ENCODE measurements at regions of chr10 and their contacts with region 1.

Region 1: DNA sequence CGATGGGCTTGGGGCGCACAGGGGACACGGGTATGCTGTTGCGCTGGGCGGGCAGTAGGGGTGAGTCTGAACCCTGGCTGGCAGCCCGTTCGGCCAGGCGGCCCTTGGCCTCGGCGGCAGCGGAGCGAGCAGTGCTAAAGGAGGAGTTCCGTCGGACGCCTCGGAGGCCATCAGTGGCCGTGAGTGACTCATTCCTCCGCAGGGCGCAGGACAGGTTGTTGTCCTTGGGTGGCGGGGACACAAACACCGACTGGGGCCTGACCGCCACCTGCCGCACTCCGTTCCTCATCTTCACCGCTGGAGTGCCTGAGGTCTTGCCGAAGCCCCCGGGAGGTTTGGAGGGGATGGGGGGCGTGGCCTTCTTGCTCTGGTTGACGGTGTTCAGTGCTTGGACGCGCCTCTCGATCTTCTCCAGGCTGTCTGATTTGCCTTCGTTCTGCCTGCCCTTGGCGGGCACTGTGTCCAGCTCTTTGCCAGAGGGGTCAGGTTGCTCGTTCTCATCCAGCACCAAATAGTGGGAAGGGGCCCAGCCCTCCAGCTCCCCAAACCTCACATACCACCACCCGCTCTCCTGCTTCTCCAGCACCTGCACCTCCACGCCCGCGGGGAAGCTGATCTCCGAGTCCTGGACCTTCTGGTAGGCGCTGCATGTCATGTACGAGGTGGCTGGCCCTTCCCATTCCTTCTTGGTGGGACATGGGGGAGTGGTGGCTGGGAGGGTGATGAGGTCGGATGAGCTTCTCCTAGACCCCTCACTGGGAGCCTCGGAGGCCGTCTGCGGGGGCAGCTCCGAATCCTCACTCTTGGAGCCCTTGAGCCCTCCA is 108.7 kb downstream of the NEURL1 start:
- DNase-seq: no peak
- H3K4me3 ChIP-seq: no peak overlapping the region
- H3K27ac ChIP-seq: no peak overlapping the region
- H3K4me1 ChIP-seq: peaks cover 0 to 49% (median 9%) of the 10 kb centered on the region in 3 donors
- H3K27me3 ChIP-seq: no peaks in the 10 kb centered on the region
- CTCF ChIP-seq: no peak
- POLR2A ChIP-seq: no peak

Region 2: DNA sequence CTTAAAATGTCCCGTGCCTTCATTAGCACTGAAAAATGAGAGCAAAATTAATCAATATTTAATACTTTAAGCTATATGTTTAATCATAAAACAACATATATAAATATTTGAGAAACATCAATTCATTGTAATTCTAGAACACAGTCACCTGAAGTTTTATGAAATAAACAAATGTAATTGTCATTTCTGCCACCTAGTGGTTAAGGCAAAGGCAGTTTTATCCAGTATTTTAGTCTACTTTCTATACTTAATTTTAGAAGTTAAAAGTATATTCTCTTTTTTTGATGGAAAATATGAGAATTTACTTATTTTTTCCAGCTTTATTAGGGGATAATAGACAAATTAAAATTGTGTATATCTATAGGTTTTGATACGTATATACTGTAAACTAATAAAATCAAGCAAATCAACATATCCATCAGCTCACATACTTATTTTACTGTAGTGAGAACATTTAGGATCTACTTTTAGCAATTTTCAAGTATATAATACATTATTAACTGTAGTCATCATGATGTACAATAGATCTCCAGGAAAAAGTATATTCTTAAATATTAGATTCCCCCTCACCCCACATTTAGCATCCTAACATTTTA is 268.2 kb before region 1 on chr10:
- intact Hi-C with region 1: no loop called
- DNase-seq: no peak
- H3K4me3 ChIP-seq: no peak overlapping the region
- H3K27ac ChIP-seq: no peak overlapping the region
- H3K4me1 ChIP-seq: no peaks in the 10 kb centered on the region
- H3K27me3 ChIP-seq: no peaks in the 10 kb centered on the region
- CTCF ChIP-seq: peak in 5 of 6 experiments; percentile 38 to 72 (median 60)
- POLR2A ChIP-seq: no peak

Region 3: GRCh38 chr10:103429647-103430046 is 172.6 kb before region 1 on chr10:
- intact Hi-C with region 1: no loop called
- DNase-seq: no peak
- H3K4me3 ChIP-seq: no peak overlapping the region
- H3K27ac ChIP-seq: no peak overlapping the region
- H3K4me1 ChIP-seq: no peaks in the 10 kb centered on the region
- H3K27me3 ChIP-seq: no peaks in the 10 kb centered on the region
- CTCF ChIP-seq: no peak
- POLR2A ChIP-seq: no peak

Region 4: GRCh38 chr10:103681617-103682399 is 79.6 kb after region 1 on chr10:
- intact Hi-C with region 1: loop called (anchors 5 kb)
- DNase-seq: no peak
- H3K4me3 ChIP-seq: no peak overlapping the region
- H3K27ac ChIP-seq: peak overlapping the region in 3 of 4 donors; percentile 42 to 87 (median 62)
- H3K4me1 ChIP-seq: peaks cover 0 to 67% (median 38%) of the 10 kb centered on the region in 3 donors
- H3K27me3 ChIP-seq: no peaks in the 10 kb centered on the region
- CTCF ChIP-seq: no peak
- POLR2A ChIP-seq: no peak

Region 5: GRCh38 chr10:103833731-103834365 is 231.6 kb after region 1 on chr10:
- intact Hi-C with region 1: no loop called
- DNase-seq: no peak
- H3K4me3 ChIP-seq: no peak overlapping the region
- H3K27ac ChIP-seq: peak overlapping the region in 3 of 4 donors; percentile 13 to 66 (median 62)
- H3K4me1 ChIP-seq: peaks cover 30 to 72% (median 35%) of the 10 kb centered on the region in 3 donors
- H3K27me3 ChIP-seq: no peaks in the 10 kb centered on the region
- CTCF ChIP-seq: no peak
- POLR2A ChIP-seq: no peak

Region 6: DNA sequence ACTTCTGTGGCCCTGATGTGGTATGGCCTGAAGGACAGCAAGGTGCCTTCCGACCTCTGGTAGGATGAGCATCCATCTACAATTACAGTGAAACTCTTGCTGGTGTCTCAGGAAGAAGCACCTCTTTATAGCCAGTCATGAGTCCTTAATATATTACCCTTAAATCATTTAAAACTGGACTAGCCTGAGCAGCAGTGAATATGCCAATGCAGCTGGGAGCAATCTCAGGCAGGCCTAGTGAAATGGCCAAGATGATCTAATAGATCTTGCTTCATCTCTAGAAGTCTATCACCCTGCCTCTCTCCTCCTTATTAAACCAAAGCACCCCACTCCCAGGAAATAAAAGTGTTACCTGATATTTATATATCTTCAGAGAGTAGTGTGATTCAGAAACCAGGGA is 972.2 kb after region 1 on chr10:
- intact Hi-C with region 1: no loop called
- DNase-seq: no peak
- H3K4me3 ChIP-seq: no peak overlapping the region
- H3K27ac ChIP-seq: no peak overlapping the region
- H3K4me1 ChIP-seq: no peaks in the 10 kb centered on the region
- H3K27me3 ChIP-seq: peaks cover 0 to 17% (median 0%) of the 10 kb centered on the region in 4 donors
- CTCF ChIP-seq: no peak
- POLR2A ChIP-seq: no peak

Measured in esophagus squamous epithelium (tissue), 5 donors.